ENCODE measurements at regions of chr4 and their contacts with region 1.

Region 1: GRCh38 chr4:99054428-99054994 is 34.1 kb downstream of the ADH5 start:
- DNase-seq: no peak
- H3K4me3 Mint-ChIP-seq: no peak overlapping the region
- H3K27ac Mint-ChIP-seq: peak overlapping the region; percentile 65
- H3K4me1 Mint-ChIP-seq: peaks cover 53% of the 10 kb centered on the region
- H3K27me3 Mint-ChIP-seq: no peaks in the 10 kb centered on the region

Region 2: DNA sequence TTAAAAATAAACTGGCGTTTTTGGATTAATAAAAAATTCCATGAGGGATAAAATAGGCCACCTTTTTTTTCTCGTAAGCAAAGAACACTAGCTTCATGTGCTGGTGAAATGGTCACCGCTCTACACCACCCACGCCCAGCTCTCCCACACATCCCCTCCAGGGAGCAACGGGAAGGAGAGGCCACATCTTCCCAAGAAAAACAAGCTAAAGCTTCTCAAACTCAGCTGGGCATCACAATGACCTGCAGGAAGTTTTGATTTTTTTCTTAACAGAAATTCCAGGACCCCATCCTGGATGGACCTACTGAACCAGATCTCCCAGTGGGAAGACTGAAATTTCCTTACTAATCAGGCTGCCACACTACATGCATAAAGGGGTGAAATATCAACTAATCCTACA is 405.9 kb before region 1 on chr4:
- CTCF ChIA-PET with region 1: no interaction called
- POLR2A ChIA-PET with region 1: no interaction called
- DNase-seq: no peak
- H3K4me3 Mint-ChIP-seq: no peak overlapping the region
- H3K27ac Mint-ChIP-seq: no peak overlapping the region
- H3K4me1 Mint-ChIP-seq: peaks cover 21% of the 10 kb centered on the region
- H3K27me3 Mint-ChIP-seq: no peaks in the 10 kb centered on the region

Region 3: DNA sequence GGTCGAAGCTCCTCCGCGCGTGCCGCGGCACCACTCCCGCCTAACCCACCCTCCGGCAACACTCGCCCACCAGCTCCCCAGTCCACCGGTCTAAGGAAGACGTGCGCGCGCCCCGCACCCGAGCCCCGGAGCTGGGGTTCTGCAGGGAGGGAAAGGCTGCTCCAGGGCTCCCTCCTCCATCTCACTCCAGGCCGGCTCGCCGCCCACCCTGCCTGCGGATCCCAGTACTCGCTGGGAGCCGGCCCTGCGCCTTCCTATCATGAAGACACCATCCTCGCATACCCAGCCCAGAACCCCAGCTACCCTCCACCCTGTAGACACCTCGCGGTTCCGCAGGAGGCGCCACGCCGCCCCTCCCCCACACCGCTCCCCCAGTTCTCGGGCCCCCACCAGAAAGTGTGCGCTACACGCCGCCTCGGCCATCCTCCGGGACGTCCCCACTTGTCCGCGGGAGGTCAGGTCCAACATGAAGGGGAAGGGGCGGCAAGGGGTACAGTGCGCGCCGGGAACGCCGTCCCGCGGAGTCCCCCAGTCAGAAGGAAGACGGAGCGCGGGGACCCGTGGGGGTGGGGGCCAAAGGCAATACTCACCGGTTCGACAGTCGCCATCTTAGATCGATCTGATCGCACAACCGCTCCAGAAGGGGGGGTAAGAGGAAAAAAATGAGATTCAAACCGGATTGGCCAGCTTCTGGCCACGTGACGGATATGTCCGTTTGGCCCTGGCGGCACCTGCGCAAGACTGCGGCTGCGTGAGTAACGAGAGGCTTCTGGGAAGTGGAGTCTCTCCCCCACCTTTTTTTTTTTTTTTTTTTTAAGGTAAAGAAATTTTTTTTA is 125.8 kb before region 1 on chr4 and contains the start of gene EIF4E:
- CTCF ChIA-PET with region 1: interaction called, 12 read pairs
- POLR2A ChIA-PET with region 1: no interaction called
- DNase-seq: peak; percentile 98
- H3K4me3 Mint-ChIP-seq: peak within 1 kb of the TSS; percentile 87
- H3K27ac Mint-ChIP-seq: peak within 1 kb of the TSS; percentile 96
- H3K4me1 Mint-ChIP-seq: peaks cover 39% of the 10 kb centered on the region
- H3K27me3 Mint-ChIP-seq: no peaks in the 10 kb centered on the region
- total RNA-seq, gene EIF4E: 83.7 to 101 TPM

Region 4: DNA sequence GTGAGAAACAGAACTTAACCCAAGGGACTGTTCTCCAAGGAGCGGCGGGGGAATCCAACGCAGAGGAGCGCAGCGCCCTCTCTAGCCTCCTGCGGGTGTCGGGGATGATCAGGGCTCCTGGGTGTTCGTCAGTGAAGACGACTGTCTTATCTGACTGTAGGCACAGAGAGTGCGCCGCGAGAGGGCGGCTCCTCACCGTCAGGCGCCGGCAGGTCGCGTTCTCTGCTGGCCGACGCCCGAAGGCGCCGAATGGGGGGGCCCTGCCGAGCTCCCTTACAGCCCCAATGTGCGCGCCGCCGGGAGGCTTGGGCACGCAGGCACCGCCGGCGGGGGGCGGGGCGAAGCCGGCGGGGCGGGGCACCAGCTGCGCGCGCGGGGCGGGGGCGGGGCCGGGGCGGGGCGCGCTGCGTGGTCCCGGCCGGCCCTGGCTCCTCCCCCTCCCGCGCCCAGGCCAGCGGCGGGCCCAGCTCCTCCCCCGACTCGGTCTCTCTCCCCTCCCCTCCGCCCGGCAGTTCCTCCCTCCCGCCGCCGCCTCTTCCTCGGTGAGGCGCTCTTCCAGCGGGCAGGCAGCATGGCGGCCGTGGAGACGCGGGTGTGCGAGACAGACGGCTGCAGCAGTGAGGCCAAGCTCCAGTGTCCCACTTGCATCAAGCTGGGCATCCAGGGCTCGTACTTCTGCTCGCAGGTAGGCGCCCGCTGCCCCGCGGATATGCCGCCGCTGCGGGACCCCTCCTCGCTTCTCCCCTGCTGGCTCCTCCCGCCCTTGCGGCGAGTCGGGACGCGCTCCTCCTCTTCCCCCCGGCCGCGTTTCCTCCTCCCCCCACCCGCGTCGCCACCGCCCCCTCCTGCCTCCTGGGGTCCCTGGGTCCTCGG is 59.1 kb before region 1 on chr4 and contains the start of gene METAP1:
- CTCF ChIA-PET with region 1: interaction called, 28 read pairs
- POLR2A ChIA-PET with region 1: interaction called, 8 read pairs
- DNase-seq: peak; percentile 96
- H3K4me3 Mint-ChIP-seq: peak within 1 kb of the TSS; percentile 83
- H3K27ac Mint-ChIP-seq: peak within 1 kb of the TSS; percentile 99
- H3K4me1 Mint-ChIP-seq: peaks cover 36% of the 10 kb centered on the region
- H3K27me3 Mint-ChIP-seq: no peaks in the 10 kb centered on the region
- total RNA-seq, gene METAP1: 49.2 to 59.7 TPM

Region 5: GRCh38 chr4:99071159-99071558 is 16.6 kb after region 1 on chr4:
- CTCF ChIA-PET with region 1: interaction called, 11 read pairs
- POLR2A ChIA-PET with region 1: no interaction called
- DNase-seq: no peak
- H3K4me3 Mint-ChIP-seq: no peak overlapping the region
- H3K27ac Mint-ChIP-seq: no peak overlapping the region
- H3K4me1 Mint-ChIP-seq: peaks cover 6% of the 10 kb centered on the region
- H3K27me3 Mint-ChIP-seq: no peaks in the 10 kb centered on the region

Measured in activated CD4-positive, alpha-beta T cell treated with anti-CD3 and anti-CD28 coated beads, Interleukin-2, amount 10 ng/mL, durations not matched to agents 7 days and 5 days (primary cell).